Calu3 (cell line): ENCODE measurements at regions of chr20 and their contacts with region 1.

Region 1: GRCh38 chr20:38165089-38165989 is at the start of gene TGM2:
- DNase-seq: peak; percentile 98
- H3K4me3 Mint-ChIP-seq: peak within 1 kb of the TSS; percentile 59
- H3K27ac Mint-ChIP-seq: peak within 1 kb of the TSS; percentile 37
- H3K4me1 Mint-ChIP-seq: peaks cover 70% of the 10 kb centered on the region
- H3K27me3 Mint-ChIP-seq: no peaks in the 10 kb centered on the region
- CTCF ChIP-seq: peak; percentile 97
- total RNA-seq, gene TGM2: 261 and 311 TPM in 2 replicates

Region 2: DNA sequence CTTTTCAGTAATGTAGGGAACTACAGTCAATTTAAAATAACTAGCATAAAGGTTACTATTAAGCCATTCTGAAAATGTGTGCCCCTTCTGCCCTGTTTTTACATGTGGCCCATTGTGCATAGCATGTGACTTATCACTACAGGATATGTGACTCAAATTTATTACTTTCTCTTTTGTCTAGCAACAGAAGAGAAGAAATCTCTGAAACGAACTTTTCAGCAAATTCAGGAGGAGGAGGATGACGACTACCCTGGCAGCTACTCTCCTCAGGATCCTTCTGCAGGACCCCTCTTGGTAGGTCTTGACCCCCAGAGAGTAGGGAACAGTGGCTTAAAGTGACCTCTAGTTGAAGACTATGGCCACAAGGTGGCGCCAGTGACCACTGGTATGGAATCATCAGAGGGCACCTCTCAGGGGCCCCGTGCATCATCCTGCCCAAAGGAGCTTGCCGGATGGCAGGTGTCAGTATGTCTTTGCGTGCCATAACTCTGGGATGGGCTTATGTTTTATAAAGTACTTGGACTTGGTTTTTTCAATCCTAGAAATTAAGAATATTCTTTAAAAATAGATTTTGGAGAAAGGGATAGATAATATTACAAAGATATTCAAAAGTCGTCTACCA is 107.9 kb before region 1 on chr20:
- CTCF ChIA-PET with region 1: interaction called, 13 read pairs
- intact Hi-C with region 1: loop called (anchors 1 kb)
- DNase-seq: peak; percentile 91
- H3K4me3 Mint-ChIP-seq: no peak overlapping the region
- H3K27ac Mint-ChIP-seq: no peak overlapping the region
- H3K4me1 Mint-ChIP-seq: no peaks in the 10 kb centered on the region
- H3K27me3 Mint-ChIP-seq: no peaks in the 10 kb centered on the region
- CTCF ChIP-seq: peak; percentile 97

Region 3: DNA sequence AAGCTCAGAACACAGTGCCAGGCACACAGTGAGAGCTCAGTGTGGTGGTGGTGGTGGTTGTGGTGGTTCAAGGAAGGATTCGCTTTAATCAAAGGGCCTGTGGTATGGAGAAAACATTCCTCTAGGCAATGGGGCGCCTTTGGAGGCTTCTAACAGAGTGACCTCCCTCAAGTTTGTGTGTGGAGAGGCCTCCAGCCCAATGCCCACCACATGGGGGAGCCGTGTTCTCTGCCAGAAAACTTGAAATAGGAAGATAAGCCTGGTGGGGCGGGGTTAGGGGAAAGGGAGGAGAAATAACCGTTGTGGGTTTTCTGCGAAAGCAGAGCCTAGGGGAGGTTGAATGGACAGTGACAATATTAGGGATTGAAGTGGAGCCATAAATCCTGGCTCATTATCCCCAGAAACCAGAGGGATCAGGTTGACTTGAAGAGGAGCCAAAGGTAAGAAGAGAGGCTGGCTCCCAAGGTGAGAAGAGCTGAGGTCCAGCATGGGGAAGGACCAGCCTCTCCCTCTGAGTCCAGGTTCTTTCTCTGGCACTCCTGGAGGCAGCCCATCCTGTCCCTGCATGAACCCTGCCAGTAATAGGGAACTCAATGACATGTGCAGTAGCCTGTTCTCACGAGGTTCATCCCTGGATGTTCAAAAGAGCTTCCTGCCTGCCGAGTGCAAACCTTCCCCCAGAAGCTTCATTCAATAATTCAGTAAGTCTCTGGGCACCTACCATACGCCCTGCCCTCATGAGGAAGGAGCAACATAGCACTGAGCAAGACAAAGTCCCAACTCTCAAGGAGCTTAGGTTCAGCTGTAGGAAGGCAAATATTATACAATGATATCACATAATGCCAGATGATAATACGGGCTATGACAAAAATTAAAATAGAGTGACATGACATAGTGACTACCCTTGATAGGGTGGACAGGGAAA is 51.7 kb before region 1 on chr20:
- CTCF ChIA-PET with region 1: interaction called, 3 read pairs
- intact Hi-C with region 1: loop called (anchors 1 kb)
- DNase-seq: peak; percentile 86
- H3K4me3 Mint-ChIP-seq: no peak overlapping the region
- H3K27ac Mint-ChIP-seq: peak overlapping the region; percentile 17
- H3K4me1 Mint-ChIP-seq: peaks cover 60% of the 10 kb centered on the region
- H3K27me3 Mint-ChIP-seq: no peaks in the 10 kb centered on the region
- CTCF ChIP-seq: peak; percentile 58

Region 4: GRCh38 chr20:38143646-38144554 is 21.4 kb before region 1 on chr20:
- CTCF ChIA-PET with region 1: interaction called, 13 read pairs
- intact Hi-C with region 1: loop called (anchors 1 kb)
- DNase-seq: peak; percentile 90
- H3K4me3 Mint-ChIP-seq: peak overlapping the region; percentile 20
- H3K27ac Mint-ChIP-seq: peak overlapping the region; percentile 94
- H3K4me1 Mint-ChIP-seq: peaks cover 80% of the 10 kb centered on the region
- H3K27me3 Mint-ChIP-seq: no peaks in the 10 kb centered on the region
- CTCF ChIP-seq: no peak

Region 5: GRCh38 chr20:38221119-38221589 is 55.8 kb after region 1 on chr20:
- CTCF ChIA-PET with region 1: interaction called, 9 read pairs
- intact Hi-C with region 1: loop called (anchors 1 kb)
- DNase-seq: peak; percentile 96
- H3K4me3 Mint-ChIP-seq: no peak overlapping the region
- H3K27ac Mint-ChIP-seq: no peak overlapping the region
- H3K4me1 Mint-ChIP-seq: peaks cover 38% of the 10 kb centered on the region
- H3K27me3 Mint-ChIP-seq: no peaks in the 10 kb centered on the region
- CTCF ChIP-seq: peak; percentile 99